ENCODE measurements at regions of chr14 and their contacts with region 1.

Region 1: GRCh38 chr14:75654127-75654732 is 6.4 kb downstream of the ERG28 start:
- DNase-seq: peak; percentile 83
- H3K27ac ChIP-seq: no peak overlapping the region
- CTCF ChIP-seq: peak; percentile 97

Region 2: DNA sequence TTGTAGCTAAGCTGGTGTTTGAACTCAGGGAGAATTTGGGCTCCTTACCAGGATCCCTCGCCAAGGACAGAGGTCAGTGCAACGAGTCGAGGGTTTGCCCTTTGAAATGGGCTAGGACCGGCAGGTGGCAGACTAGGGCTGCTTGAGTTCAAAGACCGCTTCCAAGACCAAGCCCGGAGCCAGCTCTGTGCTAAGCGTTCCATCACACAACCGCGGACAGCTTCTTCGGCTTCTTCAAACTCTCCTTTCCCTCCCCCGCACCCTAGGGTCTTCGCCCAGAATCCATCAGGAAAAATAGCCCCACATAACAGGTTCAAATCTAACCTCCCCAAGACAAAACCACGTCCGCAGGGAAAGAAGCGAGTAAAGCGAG is 76.5 kb before region 1 on chr14:
- CTCF ChIA-PET with region 1: interaction called, 162 read pairs
- POLR2A ChIA-PET with region 1: interaction called, 3 read pairs
- DNase-seq: peak; percentile 85
- H3K27ac ChIP-seq: peak overlapping the region; percentile 85
- CTCF ChIP-seq: peak; percentile 83

Measured in RWPE1 (cell line).